GM12878 (cell line): ENCODE measurements at regions of chr17 and their contacts with region 1.

Region 1: DNA sequence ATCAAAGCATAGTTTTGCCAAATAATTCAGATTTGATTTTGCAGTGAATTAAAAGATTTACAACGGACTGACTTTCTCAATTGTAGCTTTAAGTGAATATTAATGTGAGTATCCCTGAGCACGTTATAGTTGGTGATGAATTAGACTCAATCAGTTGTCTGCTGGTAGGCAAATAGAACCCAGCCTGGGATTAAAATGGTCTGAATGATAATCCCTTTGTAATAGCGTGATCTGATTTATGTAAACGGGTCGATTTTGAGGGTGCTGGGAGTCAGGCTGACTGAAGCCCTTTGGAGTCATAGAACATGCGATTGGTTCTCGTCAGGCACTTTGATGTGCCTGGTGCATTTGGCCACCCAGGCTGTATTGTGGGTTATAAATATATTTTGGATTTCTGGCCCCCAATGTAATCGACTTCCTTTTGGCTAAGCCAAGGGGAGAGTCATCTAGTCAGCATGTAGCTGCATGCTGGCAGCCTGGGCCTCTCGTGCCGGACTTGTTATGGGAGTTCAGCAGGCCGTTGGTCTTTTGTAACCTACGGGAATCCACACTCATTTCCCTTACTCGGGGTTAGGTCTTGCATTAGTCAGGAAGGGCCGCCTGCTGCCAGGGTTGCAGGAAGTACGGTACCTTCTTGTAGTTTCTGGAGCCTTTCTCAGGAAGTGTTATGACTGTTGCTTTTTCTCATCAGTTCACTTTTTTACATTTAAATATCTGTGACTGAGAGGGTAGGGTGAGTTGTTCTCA is 5.4 kb downstream of the PGS1 start:
- DNase-seq: peak; percentile 74
- ATAC-seq: peak; percentile 38
- H3K4me3 ChIP-seq: peak overlapping the region; percentile 53
- H3K27ac ChIP-seq: peak overlapping the region; percentile 97
- H3K4me1 ChIP-seq: peaks cover 84% of the 10 kb centered on the region
- H3K27me3 ChIP-seq: no peaks in the 10 kb centered on the region
- CTCF ChIP-seq: no peak
- EP300 ChIP-seq: no peak
- POLR2A ChIP-seq: 0 out of 2 replicates have a peak, but pooled peaks have one; percentile 36
- RAD21 ChIP-seq: no peak

Region 2: DNA sequence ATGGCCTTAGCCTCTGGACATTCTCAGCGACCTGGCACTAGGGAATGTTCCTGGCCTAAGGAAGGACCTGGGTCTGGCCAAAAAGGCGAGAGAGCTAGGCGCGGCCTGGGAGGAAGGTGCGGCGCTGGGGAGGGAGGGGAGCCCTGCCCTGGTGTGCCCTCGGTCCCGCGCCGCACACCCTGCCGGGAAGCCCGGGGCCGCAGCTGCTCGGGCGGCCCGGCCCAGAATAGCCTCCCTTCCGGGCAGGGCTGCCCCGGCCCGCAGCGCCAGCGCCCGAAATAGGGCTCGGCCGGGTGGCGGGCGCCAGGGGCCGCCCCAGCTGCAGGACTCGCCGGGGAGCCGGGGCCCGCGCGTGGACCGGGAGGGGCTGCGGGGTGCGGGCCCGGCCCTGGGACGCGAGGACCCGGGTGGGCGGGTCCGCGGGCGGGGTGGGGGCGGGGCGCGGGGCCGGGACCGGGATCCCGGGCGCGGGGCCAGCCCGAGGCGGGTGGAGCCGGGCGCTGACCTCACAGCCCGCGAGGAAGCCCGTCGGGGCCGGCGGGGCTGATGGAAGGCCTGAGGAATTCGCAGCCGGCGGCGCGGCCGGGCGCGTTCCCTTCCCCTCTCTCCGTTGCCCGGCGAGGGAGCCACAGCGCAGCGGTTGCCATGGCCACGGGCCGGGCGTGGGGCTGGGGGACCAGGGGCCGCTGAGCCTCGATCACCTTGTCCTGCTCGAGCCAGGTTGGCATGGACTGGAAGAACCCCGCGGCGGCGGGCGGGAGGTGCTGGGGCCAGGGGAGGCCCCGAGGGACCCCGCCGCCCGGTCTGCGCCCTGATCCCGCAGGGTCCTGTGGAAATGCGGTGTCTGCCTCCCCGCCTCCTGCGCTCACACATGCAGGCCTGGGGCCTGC is 42.1 kb before region 1 on chr17:
- CTCF ChIA-PET with region 1: interaction called, 3 read pairs
- POLR2A ChIA-PET with region 1: interaction called, 18 read pairs
- RAD21 ChIA-PET with region 1: interaction called, 4 read pairs
- SMC1A ChIA-PET with region 1: interaction called, 3 read pairs
- in situ Hi-C with region 1: no loop called
- intact Hi-C with region 1: no loop called
- DNase-seq: no peak
- ATAC-seq: peak; percentile 2
- H3K4me3 ChIP-seq: no peak overlapping the region; the same call in 1 of the 2 replicates
- H3K27ac ChIP-seq: no peak overlapping the region
- H3K4me1 ChIP-seq: peaks cover 60% of the 10 kb centered on the region
- H3K27me3 ChIP-seq: no peaks in the 10 kb centered on the region
- CTCF ChIP-seq: no peak
- EP300 ChIP-seq: no peak
- POLR2A ChIP-seq: no peak
- RAD21 ChIP-seq: no peak

Region 3: DNA sequence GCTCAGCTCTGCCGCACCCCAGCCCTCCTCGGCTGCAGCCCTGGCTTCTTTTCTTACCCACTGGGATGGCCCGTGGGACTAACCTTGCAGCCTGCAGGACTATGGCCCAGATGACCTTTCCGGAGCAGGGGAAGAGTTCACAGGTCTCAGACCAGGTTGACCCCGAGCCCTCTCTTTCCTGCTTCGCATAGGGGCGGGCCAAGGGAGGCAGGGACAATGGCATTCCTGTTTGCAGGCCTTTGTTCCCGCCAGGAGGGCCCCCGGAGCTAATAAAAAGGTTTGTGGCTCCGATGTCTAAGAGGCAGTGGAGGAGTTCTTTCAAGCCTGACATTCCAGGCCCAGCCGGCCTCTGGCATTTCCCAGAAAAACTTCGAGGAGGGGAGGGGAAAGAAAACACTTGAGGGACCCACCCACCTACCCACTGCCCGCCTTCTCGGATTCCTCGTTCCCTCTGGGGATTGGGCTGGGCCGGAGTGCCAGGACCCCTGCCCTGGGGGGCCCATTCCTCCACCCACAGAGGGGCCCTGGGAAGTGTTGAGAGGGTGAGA is 18.3 kb before region 1 on chr17:
- CTCF ChIA-PET with region 1: interaction called, 6 read pairs
- POLR2A ChIA-PET with region 1: interaction called, 16 read pairs
- RAD21 ChIA-PET with region 1: interaction called, 12 read pairs
- SMC1A ChIA-PET with region 1: interaction called, 3 read pairs
- in situ Hi-C with region 1: no loop called
- intact Hi-C with region 1: loop called (anchors 2 kb)
- DNase-seq: no peak
- ATAC-seq: no peak
- H3K4me3 ChIP-seq: no peak overlapping the region
- H3K27ac ChIP-seq: no peak overlapping the region
- H3K4me1 ChIP-seq: peaks cover 23% of the 10 kb centered on the region
- H3K27me3 ChIP-seq: 0 out of 4 replicates have a peak, but pooled peaks cover 0 to 2% of the 10 kb centered on the region in 2 experiments
- CTCF ChIP-seq: no peak
- EP300 ChIP-seq: no peak
- POLR2A ChIP-seq: no peak
- RAD21 ChIP-seq: no peak

Region 4: GRCh38 chr17:78441271-78441986 is 57.5 kb after region 1 on chr17:
- CTCF ChIA-PET with region 1: no interaction called
- POLR2A ChIA-PET with region 1: no interaction called
- RAD21 ChIA-PET with region 1: no interaction called
- SMC1A ChIA-PET with region 1: no interaction called
- in situ Hi-C with region 1: no loop called
- intact Hi-C with region 1: no loop called
- DNase-seq: no peak
- ATAC-seq: no peak
- H3K4me3 ChIP-seq: no peak overlapping the region
- H3K27ac ChIP-seq: no peak overlapping the region
- H3K4me1 ChIP-seq: no peaks in the 10 kb centered on the region
- H3K27me3 ChIP-seq: no peaks in the 10 kb centered on the region
- CTCF ChIP-seq: no peak
- EP300 ChIP-seq: no peak
- POLR2A ChIP-seq: no peak
- RAD21 ChIP-seq: no peak